ENCODE measurements at regions of chr6 and their contacts with region 1.

Region 1: DNA sequence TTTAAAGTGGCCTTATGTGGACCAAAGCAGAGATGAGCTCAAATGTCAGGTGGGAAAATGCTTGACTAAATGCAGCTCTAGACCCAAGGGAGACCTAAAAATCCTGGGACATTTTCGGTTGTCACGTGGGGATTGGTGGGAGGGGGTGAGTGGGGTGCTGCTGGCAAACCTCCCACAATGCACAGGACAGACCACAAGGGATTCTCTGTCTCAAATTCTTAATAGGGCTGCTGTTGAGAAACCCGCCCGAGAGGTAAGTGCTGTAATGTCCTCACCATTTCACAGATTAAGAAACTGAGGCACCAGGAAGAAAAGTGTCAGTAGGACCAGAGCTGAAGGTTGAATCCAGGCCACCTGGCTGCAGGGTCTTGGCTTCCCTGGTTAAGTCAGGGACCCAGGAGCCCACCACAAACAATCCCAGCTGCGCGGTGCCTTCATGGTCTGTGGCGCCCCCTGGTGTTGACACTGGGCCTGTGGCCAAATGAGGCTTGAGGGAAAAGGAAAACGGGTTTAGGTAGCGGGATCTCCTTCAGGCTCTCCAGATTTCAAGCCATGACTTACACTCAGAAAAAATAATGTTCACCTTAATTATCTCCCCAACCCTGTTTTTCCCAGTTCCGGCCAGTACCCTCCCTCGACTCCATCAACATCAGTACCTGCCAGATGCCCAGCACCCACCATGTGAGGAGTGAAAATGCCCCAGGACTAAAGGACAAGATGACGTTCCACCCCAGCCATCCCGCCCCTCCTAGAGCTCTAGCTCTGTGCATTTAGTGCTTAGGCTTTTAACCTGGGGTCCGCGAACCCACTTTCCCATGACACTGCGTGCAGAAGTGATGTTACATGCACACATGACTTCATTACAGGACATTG is 7.2 kb downstream of the HLA-G start:
- DNase-seq: peak in 1 of 2 experiments; percentile 72
- H3K4me3 ChIP-seq: no peak overlapping the region
- H3K4me1 ChIP-seq: no peaks in the 10 kb centered on the region
- H3K27me3 ChIP-seq: peaks cover 26% of the 10 kb centered on the region

Region 2: GRCh38 chr6:29071831-29072723 is 762.7 kb before region 1 on chr6:
- in situ Hi-C with region 1: no loop called
- DNase-seq: peak; percentile 55 to 60
- H3K4me3 ChIP-seq: no peak overlapping the region
- H3K4me1 ChIP-seq: no peaks in the 10 kb centered on the region
- H3K27me3 ChIP-seq: peaks cover 4% of the 10 kb centered on the region; the same call in 1 of the 2 replicates

Region 3: DNA sequence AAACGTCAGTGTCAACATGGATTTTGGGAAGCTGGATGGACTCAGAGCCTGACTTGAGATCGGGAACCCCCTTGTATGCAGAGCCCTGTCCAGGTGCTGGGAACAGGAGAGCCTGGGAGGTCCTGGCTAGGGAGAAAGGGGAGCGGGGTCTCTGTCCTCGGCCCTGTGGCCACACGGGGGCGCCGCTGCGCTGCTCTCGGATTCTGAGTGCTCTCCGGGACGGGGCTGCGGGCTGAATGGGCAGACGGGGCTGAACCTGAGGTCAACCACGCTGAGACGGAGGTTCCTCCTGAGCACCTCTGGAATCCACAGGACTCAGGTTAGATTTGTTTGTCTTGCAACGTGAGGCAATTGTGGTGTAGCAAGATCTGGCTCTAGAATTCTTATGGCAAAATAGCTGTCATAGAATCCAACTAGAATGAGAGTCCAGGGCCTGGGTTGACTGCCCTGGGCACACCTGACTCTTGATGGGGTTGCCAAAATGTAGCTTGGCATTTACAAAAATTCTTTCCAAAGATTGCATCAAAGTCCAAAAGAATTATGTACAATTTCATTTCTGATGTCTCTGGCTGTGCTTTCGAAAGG is 132.2 kb before region 1 on chr6:
- in situ Hi-C with region 1: loop called (anchors 5 kb)
- DNase-seq: peak in 1 of 2 experiments; percentile 81
- H3K4me3 ChIP-seq: no peak overlapping the region
- H3K4me1 ChIP-seq: no peaks in the 10 kb centered on the region
- H3K27me3 ChIP-seq: peaks cover 14% of the 10 kb centered on the region

Region 4: GRCh38 chr6:29737707-29738630 is 96.8 kb before region 1 on chr6:
- in situ Hi-C with region 1: loop called (anchors 5 kb)
- DNase-seq: peak; percentile 52 to 70
- H3K4me3 ChIP-seq: no peak overlapping the region
- H3K4me1 ChIP-seq: no peaks in the 10 kb centered on the region
- H3K27me3 ChIP-seq: no peaks in the 10 kb centered on the region

Region 5: GRCh38 chr6:29777310-29777709 is 57.5 kb before region 1 on chr6:
- in situ Hi-C with region 1: no loop called
- DNase-seq: no peak
- H3K4me3 ChIP-seq: no peak overlapping the region
- H3K4me1 ChIP-seq: no peaks in the 10 kb centered on the region
- H3K27me3 ChIP-seq: no peaks in the 10 kb centered on the region

Measured in HAP-1 (cell line).